HCT116 (cell line): ENCODE measurements at regions of chr14 and their contacts with region 1.

Region 1: DNA sequence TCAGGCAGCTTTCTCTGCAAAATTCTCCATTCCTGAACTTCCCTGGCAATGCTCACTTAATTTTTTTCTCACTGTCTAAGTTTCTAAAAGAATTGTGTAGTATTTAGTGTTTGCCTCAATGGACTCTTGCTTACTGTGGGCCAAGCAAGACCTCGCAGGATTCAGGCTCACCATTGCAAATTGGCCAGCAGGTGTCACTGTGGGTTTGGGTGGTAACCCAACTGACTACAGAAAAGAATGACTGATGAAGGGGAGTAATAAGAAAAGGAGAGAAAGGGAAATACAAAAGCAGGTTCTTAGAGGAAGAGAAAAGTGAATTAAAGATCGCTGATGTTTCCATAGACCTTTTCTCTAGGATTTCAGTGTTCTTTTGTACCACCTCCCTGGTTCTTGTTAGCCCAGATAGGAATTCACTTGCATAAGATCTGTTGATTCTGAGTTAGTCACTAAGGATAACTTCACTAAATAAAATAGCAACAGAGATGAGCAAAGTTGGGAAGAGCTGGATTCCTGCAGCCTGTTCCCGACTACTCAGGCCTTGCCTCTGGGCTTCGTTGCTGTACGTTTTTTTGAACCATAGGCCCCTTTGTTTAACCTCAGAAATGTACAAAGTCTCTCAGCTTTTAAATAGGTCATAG is 386.5 kb upstream of the DDHD1 start:
- DNase-seq: peak; percentile 71
- ATAC-seq: peak; percentile 95
- H3K4me3 ChIP-seq: no peak overlapping the region
- H3K27ac ChIP-seq: peak overlapping the region; percentile 34; the same call in 1 of the 2 replicates
- H3K4me1 ChIP-seq: peaks cover 14 to 23% of the 10 kb centered on the region in 2 experiments; a peak in 3 of 4 replicates
- H3K27me3 ChIP-seq: no peaks in the 10 kb centered on the region
- CTCF ChIP-seq: peak; percentile 73 to 96 (median 85)
- POLR2A ChIP-seq: no peak
- RAD21 ChIP-seq: peak; percentile 93

Region 2: DNA sequence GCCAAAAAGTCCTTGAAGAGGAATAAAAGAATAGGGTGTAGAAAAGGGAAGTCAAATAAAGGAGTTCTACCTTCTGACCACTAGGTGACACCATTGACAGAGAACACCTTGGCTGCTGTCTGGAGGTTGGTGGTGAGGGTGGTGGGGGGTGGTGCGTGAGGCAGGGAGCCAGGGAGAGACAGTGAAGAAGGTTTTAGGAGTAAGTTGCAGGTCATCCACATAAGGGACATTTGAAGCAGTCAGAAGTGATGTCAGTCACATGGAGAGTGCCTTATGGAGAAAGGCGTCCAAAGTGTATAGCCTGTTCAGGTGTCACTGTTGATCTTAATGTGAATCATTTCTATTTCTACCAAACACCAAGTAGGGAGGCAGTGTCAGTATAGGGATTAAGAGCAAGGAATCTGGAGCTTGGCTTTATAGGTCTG is 107.2 kb before region 1 on chr14:
- CTCF ChIA-PET with region 1: interaction called, 16 read pairs
- POLR2A ChIA-PET with region 1: no interaction called
- RAD21 ChIA-PET with region 1: interaction called in 1 of 2 experiments, 3 read pairs
- intact Hi-C with region 1: loop called (anchors 5 kb)
- DNase-seq: peak; percentile 40
- ATAC-seq: peak; percentile 99
- H3K4me3 ChIP-seq: no peak overlapping the region
- H3K27ac ChIP-seq: peak overlapping the region; percentile 33; the same call in 1 of the 2 replicates
- H3K4me1 ChIP-seq: peaks cover 9 to 24% of the 10 kb centered on the region in 2 experiments; a peak in 3 of 4 replicates
- H3K27me3 ChIP-seq: no peaks in the 10 kb centered on the region
- CTCF ChIP-seq: peak; percentile 43 to 84 (median 66); a peak in 5 of 6 replicates
- POLR2A ChIP-seq: no peak
- RAD21 ChIP-seq: peak; percentile 81

Region 3: DNA sequence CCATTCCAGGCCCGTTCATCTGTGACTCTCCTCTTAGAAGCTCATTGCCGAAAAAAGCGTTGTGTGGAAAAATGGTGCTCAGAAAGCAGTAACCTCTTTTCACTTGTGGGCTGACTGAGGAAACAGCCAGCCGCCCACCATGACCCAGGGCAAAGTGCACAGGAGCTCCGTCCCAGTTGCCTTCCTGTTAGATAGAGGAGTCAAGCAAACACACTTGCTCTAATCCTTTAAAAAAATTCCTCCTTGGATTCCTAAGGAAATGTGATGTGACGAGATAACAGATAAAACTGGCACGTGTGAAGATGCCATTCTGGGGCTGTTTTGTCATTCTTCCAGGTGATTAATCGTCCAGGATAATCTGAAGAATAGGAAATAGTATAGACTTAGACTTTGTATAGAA is 10.3 kb after region 1 on chr14:
- CTCF ChIA-PET with region 1: interaction called, 10 read pairs
- POLR2A ChIA-PET with region 1: no interaction called
- RAD21 ChIA-PET with region 1: no interaction called
- intact Hi-C with region 1: no loop called
- DNase-seq: no peak
- ATAC-seq: no peak
- H3K4me3 ChIP-seq: no peak overlapping the region
- H3K27ac ChIP-seq: no peak overlapping the region
- H3K4me1 ChIP-seq: no peaks in the 10 kb centered on the region
- H3K27me3 ChIP-seq: no peaks in the 10 kb centered on the region
- CTCF ChIP-seq: no peak
- POLR2A ChIP-seq: no peak
- RAD21 ChIP-seq: no peak

Region 4: DNA sequence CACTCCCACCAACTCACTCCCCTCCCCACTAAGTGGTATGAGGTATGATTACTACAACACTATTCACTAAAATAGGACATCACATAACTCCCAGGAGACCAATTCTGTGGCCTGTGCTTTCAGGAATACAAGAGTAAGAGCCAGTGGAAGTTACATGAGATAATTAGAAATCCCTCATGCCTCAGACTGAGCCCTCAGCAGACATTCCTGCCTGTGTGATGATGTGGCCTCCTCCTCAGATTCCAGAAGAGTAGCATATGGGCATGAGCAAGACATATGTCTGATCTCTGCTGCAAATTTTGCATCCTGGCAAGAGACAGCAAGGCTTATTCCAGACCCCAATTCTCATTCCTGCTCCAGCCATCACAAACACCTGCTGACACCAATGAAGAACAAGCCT is 463.0 kb after region 1 on chr14:
- CTCF ChIA-PET with region 1: interaction called, 7 read pairs
- POLR2A ChIA-PET with region 1: no interaction called
- RAD21 ChIA-PET with region 1: no interaction called
- intact Hi-C with region 1: loop called (anchors 1 kb)
- DNase-seq: no peak
- ATAC-seq: no peak
- H3K4me3 ChIP-seq: no peak overlapping the region
- H3K27ac ChIP-seq: no peak overlapping the region
- H3K4me1 ChIP-seq: peaks cover 44 to 46% of the 10 kb centered on the region in 2 experiments
- H3K27me3 ChIP-seq: no peaks in the 10 kb centered on the region
- CTCF ChIP-seq: no peak
- POLR2A ChIP-seq: no peak
- RAD21 ChIP-seq: no peak

Region 5: DNA sequence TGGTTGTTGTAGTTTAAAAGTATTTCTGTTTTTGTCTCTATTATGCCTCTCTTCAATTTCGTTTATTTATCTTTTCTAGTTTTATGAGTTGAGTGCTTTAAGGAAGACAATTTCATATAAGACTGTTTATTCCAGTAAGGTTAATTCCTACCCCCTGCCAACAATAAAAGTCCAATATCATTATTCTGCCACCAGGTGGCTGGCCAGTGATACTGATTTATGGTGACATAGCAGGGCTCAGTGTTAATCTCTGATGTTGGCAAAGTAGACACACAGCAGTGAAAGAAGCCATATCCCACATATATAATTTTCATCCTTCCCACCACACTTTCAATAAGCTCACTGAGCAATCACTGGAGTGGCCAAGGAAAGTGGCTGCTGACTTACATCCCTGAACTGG is 486.1 kb after region 1 on chr14:
- CTCF ChIA-PET with region 1: no interaction called
- POLR2A ChIA-PET with region 1: no interaction called
- RAD21 ChIA-PET with region 1: no interaction called
- intact Hi-C with region 1: loop called (anchors 1 kb)
- DNase-seq: peak; percentile 43
- ATAC-seq: peak; percentile 93
- H3K4me3 ChIP-seq: no peak overlapping the region
- H3K27ac ChIP-seq: no peak overlapping the region
- H3K4me1 ChIP-seq: no peaks in the 10 kb centered on the region; a peak in 1 of 4 replicates
- H3K27me3 ChIP-seq: no peaks in the 10 kb centered on the region
- CTCF ChIP-seq: peak; percentile 55 to 68 (median 59); a peak in 5 of 6 replicates
- POLR2A ChIP-seq: no peak
- RAD21 ChIP-seq: peak; percentile 79

Region 6: DNA sequence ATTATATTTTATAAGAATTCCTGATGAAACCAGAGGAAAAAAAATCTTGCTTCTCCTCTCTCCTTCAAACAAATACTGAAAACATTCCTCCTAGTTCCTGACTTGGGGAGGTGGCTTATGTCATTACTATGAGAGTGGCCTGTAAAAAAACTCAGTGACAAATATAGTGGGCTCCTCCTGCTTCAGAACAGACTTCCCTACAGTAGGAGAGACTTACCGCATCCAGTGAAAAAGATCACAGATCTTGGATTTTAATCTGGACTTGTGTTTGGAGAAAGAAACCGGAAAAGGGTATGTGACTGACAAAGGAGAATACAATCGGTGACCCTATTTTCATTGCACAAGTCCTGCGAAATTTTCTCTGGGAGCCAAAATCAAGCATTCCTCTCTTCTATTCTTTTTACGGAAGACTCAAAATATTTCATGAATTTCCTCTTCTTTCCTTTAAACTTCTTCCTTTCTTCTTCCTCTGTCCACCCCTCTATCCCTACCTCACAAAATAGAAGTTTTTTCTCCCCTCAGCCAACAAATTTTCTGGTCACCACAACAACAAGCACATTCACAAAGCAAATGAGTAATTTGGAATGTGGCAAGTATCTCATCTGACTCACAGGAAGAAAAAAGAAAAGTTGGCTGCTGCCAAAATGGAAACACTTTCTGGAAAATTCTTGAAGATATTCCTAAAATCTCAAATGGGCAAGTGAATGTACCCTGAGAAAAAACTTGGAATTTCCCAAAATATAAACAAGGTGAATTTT is 672.1 kb after region 1 on chr14:
- CTCF ChIA-PET with region 1: no interaction called
- POLR2A ChIA-PET with region 1: no interaction called
- RAD21 ChIA-PET with region 1: no interaction called
- intact Hi-C with region 1: no loop called
- DNase-seq: peak; percentile 64
- ATAC-seq: peak; percentile 77
- H3K4me3 ChIP-seq: peak overlapping the region in 1 of 2 experiments; percentile 13; a peak in 1 of 4 replicates
- H3K27ac ChIP-seq: peak overlapping the region; percentile 81; the same call in 1 of the 2 replicates
- H3K4me1 ChIP-seq: peaks cover 25 to 32% of the 10 kb centered on the region in 2 experiments
- H3K27me3 ChIP-seq: no peaks in the 10 kb centered on the region
- CTCF ChIP-seq: no peak
- POLR2A ChIP-seq: no peak
- RAD21 ChIP-seq: peak; percentile 15; the same call in 1 of the 2 replicates

Region 7: DNA sequence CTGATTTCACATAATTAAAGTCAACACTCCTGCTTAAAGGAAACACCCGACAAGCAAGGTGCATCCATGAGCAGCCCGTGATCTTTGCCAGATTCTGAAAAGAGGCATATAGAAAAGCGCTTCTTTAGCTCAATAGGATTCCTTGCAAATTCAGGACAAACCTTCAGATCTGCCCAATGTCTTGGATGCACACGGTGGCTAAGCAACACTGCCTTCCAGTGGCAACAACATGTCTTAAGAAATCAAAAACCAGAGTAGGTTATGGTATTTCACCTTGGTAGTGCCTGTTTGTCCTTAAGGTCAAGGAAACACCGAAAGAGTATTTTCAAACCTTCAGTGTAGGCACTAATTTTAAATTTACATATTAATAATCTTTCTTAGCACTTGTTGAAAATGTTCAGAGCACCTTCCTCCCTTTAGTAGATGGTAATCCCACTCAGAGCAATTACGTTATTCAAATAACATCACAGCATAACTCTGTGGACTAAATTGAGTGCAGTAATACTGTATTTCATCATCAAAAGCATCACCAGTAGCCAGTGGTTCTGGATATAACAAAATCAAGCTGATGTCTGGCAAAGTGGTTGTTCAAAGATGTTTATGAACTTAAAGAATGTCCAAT is 799.2 kb after region 1 on chr14:
- CTCF ChIA-PET with region 1: interaction called, 5 read pairs
- POLR2A ChIA-PET with region 1: no interaction called
- RAD21 ChIA-PET with region 1: no interaction called
- intact Hi-C with region 1: loop called (anchors 2 kb)
- DNase-seq: peak; percentile 55
- ATAC-seq: peak; percentile 86
- H3K4me3 ChIP-seq: no peak overlapping the region
- H3K27ac ChIP-seq: no peak overlapping the region; the same call in 1 of the 2 replicates
- H3K4me1 ChIP-seq: peaks cover 18 to 32% of the 10 kb centered on the region in 2 experiments
- H3K27me3 ChIP-seq: no peaks in the 10 kb centered on the region
- CTCF ChIP-seq: peak; percentile 62 to 75 (median 71); a peak in 5 of 6 replicates
- POLR2A ChIP-seq: no peak
- RAD21 ChIP-seq: peak; percentile 95